ENCODE measurements at regions of chr10 and their contacts with region 1.

Region 1: DNA sequence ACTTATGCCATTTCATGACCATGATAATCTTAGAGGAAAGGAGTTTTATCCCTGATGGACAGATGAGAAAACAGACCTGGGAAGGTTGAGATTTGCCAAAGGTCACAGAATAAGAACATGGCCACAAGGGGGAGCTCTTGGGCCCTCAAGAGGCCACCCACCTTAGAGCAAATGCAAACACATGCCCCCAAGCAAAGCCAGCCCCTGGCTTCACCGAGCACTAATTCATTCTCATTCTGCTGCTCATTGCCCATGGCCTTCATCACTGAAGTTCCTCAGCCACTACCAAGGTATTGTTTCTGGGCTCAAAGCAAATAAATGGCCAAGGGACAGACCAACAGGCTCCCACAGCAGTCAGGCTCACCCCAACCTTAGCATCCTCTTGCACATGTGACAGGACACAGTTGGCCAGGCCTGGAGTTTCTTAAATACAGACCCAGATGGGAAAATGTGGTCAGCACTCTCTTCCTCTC is 44.2 kb downstream of the PDLIM1 start:
- DNase-seq: peak; percentile 68
- H3K4me3 ChIP-seq: no peak overlapping the region
- H3K27ac ChIP-seq: peak overlapping the region in 1 of 2 experiments; percentile 84; a peak in 2 of 4 replicates
- H3K4me1 ChIP-seq: peaks cover 2 to 8% of the 10 kb centered on the region in 2 experiments; a peak in 3 of 4 replicates
- H3K27me3 ChIP-seq: no peaks in the 10 kb centered on the region
- CTCF ChIP-seq: peak; percentile 88
- EP300 ChIP-seq: no peak
- RAD21 ChIP-seq: peak; percentile 86

Region 2: GRCh38 chr10:94630017-94630688 is 616.5 kb before region 1 on chr10:
- CTCF ChIA-PET with region 1: interaction called, 22 read pairs
- POLR2A ChIA-PET with region 1: no interaction called
- DNase-seq: peak; percentile 23
- H3K4me3 ChIP-seq: no peak overlapping the region; a peak in 1 of 4 replicates
- H3K27ac ChIP-seq: no peak overlapping the region
- H3K4me1 ChIP-seq: no peaks in the 10 kb centered on the region; a peak in 1 of 4 replicates
- H3K27me3 ChIP-seq: no peaks in the 10 kb centered on the region
- CTCF ChIP-seq: peak; percentile 73
- EP300 ChIP-seq: no peak
- RAD21 ChIP-seq: peak; percentile 75

Region 3: GRCh38 chr10:94902570-94902969 is 344.0 kb before region 1 on chr10:
- CTCF ChIA-PET with region 1: no interaction called
- POLR2A ChIA-PET with region 1: no interaction called
- DNase-seq: no peak
- H3K4me3 ChIP-seq: no peak overlapping the region
- H3K27ac ChIP-seq: no peak overlapping the region
- H3K4me1 ChIP-seq: no peaks in the 10 kb centered on the region
- H3K27me3 ChIP-seq: no peaks in the 10 kb centered on the region
- CTCF ChIP-seq: no peak
- EP300 ChIP-seq: no peak
- RAD21 ChIP-seq: no peak

Region 4: GRCh38 chr10:95035332-95036310 is 211.0 kb before region 1 on chr10:
- CTCF ChIA-PET with region 1: no interaction called
- POLR2A ChIA-PET with region 1: no interaction called
- DNase-seq: no peak
- H3K4me3 ChIP-seq: no peak overlapping the region
- H3K27ac ChIP-seq: no peak overlapping the region
- H3K4me1 ChIP-seq: no peaks in the 10 kb centered on the region
- H3K27me3 ChIP-seq: no peaks in the 10 kb centered on the region
- CTCF ChIP-seq: no peak
- EP300 ChIP-seq: no peak
- RAD21 ChIP-seq: no peak

Region 5: GRCh38 chr10:95133016-95133752 is 113.4 kb before region 1 on chr10:
- CTCF ChIA-PET with region 1: interaction called, 17 read pairs
- POLR2A ChIA-PET with region 1: no interaction called
- DNase-seq: peak; percentile 41
- H3K4me3 ChIP-seq: no peak overlapping the region; a peak in 1 of 4 replicates
- H3K27ac ChIP-seq: no peak overlapping the region
- H3K4me1 ChIP-seq: no peaks in the 10 kb centered on the region
- H3K27me3 ChIP-seq: no peaks in the 10 kb centered on the region
- CTCF ChIP-seq: peak; percentile 80
- EP300 ChIP-seq: no peak
- RAD21 ChIP-seq: peak; percentile 85

Region 6: DNA sequence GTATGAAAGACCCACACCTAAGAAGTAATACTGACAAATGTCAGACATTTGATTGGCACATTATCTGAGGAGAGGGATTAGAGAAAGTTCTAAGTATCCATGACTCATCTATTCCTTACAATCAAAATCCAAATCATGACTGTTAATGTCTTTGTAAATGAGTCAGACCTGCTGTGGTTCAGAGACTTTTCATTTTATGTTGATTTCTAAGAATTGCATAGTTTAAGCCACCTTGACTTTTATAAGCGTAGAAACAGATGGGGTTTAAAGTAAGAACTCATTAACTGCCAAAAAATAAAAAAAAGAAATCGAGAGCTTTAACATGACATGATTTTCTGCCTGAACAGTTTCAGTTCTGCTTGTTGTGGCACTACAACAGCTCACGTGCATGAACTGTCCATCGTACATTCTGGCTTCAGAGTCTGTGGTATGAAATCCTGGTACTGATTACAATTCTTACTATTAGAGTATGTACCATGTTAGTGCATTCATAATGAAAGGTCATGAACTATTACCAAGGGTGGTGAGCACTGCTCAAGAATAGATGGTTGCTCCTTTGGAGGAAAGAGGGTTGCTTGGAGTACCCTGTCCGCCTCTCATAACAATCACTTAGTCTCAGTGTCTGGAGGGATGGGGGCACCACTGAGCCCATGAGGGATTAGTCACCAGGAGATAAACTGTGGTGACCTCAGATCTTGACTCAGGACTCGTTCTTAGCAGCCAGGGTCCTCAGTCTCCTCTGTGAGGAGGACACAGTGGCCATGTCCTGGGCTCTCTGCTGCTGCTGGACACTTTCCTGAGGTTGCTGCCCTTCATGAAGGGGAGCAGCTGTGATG is 10.3 kb before region 1 on chr10:
- CTCF ChIA-PET with region 1: interaction called, 24 read pairs
- POLR2A ChIA-PET with region 1: no interaction called
- DNase-seq: no peak
- H3K4me3 ChIP-seq: no peak overlapping the region
- H3K27ac ChIP-seq: peak overlapping the region in 1 of 2 experiments; percentile 71; a peak in 2 of 4 replicates
- H3K4me1 ChIP-seq: peaks cover 0 to 8% of the 10 kb centered on the region in 2 experiments; a peak in 2 of 4 replicates
- H3K27me3 ChIP-seq: no peaks in the 10 kb centered on the region
- CTCF ChIP-seq: no peak
- EP300 ChIP-seq: peak in 1 of 2 experiments; percentile 77; a peak in 2 of 4 replicates
- RAD21 ChIP-seq: no peak

Region 7: DNA sequence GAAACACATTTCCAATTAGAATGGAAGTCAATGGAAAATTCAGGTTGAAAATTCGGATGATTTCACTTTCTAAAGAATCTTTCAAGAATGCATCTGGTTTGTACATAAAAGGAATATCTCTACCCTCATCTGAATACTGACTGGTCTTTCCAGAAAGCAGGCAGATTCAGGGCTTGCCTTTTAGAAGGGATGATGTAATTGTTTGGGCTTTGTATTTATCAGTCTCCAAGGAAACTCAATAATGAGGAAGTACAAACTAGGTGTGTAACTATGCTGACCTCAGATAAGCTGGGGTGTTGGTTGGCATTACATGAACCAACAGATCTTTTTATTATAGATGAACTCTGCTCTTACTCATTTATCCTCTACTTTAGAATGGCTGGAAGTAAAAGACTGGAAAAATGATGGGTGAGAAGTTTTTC is 20.1 kb after region 1 on chr10:
- CTCF ChIA-PET with region 1: interaction called, 17 read pairs
- POLR2A ChIA-PET with region 1: no interaction called
- DNase-seq: peak; percentile 35
- H3K4me3 ChIP-seq: no peak overlapping the region
- H3K27ac ChIP-seq: peak overlapping the region in 1 of 2 experiments; percentile 84; a peak in 2 of 4 replicates
- H3K4me1 ChIP-seq: peaks cover 5 to 8% of the 10 kb centered on the region in 2 experiments; a peak in 2 of 4 replicates
- H3K27me3 ChIP-seq: no peaks in the 10 kb centered on the region
- CTCF ChIP-seq: no peak
- EP300 ChIP-seq: peak in 1 of 2 experiments; percentile 53; a peak in 1 of 4 replicates
- RAD21 ChIP-seq: no peak

Region 8: DNA sequence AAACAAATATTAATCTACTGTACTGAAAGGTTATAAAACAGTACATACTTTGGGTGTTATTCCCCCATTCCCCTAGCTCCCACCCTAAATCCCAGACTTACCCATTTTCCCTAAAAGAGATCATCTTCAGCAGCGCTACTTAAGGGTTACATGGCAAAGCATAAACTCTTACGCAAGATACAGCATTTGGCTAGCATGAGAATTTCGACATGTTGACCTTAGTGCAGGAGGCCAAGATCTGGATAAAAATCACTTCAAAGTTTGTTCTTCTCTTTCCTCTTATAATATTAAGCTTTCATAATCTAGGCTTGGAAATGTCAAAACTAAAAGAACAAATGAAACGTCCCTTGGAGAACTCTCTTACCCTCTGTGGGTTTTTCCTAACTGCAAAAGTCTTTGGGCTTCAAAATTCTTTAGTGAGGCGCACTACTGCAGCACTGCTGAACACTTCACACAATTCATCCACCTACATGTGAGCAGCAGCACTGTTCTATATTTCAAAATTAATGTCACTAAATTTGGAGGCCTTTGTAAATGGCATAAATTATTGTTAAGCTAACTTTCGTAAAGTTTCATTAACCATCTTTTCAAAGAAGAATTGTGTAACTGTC is 103.7 kb after region 1 on chr10:
- CTCF ChIA-PET with region 1: interaction called, 13 read pairs
- POLR2A ChIA-PET with region 1: no interaction called
- DNase-seq: no peak
- H3K4me3 ChIP-seq: no peak overlapping the region
- H3K27ac ChIP-seq: no peak overlapping the region
- H3K4me1 ChIP-seq: no peaks in the 10 kb centered on the region
- H3K27me3 ChIP-seq: no peaks in the 10 kb centered on the region
- CTCF ChIP-seq: no peak
- EP300 ChIP-seq: no peak
- RAD21 ChIP-seq: no peak

Region 9: DNA sequence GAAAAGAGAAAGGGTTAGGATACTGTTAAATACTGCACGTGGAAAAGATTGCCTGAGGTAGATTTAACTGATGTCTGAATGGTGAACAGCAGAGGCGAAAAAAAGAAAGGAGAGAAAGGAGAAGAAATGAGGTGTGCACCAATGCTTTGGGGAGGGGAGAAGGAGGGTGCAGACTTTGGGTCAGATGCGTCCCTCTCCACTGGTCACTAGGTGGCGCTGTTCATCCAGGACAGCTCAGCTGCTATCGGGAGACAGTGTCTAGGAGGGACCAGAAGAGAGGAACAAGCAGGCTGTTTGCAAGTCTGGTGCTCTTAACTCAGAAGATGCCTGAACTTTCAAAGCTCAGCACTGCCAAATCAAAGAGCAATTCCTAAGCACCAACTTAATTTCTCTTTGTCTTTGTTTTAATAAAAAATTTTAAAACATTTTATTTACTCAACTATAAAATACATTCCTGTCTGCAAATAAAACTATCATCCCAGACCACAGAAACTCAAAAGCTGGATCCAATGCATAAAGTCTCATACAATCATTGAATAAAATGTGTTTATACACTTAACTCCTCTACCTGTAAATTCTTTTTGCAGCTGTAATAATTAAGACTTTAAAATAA is 128.1 kb after region 1 on chr10:
- CTCF ChIA-PET with region 1: interaction called, 80 read pairs
- POLR2A ChIA-PET with region 1: no interaction called
- DNase-seq: peak; percentile 73
- H3K4me3 ChIP-seq: peak overlapping the region in 1 of 2 experiments; percentile 31; a peak in 1 of 4 replicates
- H3K27ac ChIP-seq: no peak overlapping the region
- H3K4me1 ChIP-seq: peaks cover 0 to 8% of the 10 kb centered on the region in 2 experiments; a peak in 2 of 4 replicates
- H3K27me3 ChIP-seq: peaks cover 10% of the 10 kb centered on the region; the same call in 1 of the 2 replicates
- CTCF ChIP-seq: peak; percentile 72
- EP300 ChIP-seq: no peak
- RAD21 ChIP-seq: peak; percentile 96

Measured in SK-N-SH (cell line).